HepG2 (cell line): ENCODE measurements at regions of chr6 and their contacts with region 1.

Region 1: DNA sequence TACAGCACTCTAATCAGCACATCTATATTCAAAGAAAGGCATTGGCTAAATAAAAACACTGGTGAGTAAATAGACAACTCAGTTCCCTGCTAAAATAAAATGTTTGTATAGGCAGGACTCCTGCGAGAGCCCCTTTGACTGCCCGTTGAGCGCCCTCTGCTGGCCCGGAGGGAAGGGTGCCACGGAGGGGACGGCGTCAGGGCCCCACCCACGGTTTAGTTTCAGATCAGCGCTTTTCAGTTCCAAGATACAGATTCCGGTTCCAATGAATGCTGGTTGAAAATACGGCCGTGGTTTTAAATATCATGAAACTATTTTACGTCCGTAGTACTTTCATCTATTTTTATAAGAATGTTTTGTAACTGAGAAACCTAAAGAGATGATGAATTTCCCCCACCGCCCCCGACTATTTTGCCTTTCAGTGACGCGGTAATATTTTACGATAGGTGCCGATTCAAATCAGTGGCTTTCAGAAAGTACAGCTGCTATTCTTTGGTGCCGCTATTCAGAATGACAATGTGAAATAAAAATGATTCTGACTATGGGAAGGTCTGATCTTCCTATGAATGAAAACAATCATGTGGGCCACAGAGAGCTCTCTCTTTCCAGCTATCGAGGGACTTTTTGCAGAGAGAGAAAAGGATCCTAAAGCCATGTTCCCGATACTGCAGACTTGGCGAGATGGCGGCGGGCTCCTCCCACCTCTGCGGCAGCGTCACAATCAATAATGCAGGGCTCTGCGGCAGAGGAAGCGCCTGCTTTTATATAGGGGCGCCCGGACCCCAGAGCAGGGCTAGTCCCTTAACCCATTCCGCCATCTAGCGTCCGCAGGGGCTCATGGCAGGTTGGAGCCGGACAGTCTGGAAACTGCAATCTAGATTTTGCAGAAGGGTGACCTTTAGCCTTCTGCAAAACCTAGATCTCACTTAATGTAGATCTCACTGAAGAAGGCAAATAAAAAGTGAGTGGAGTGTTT is 10.6 kb upstream of the CCN6 start:
- DNase-seq: peak; percentile 86
- ATAC-seq: peak; percentile 98
- H3K4me3 ChIP-seq: peak overlapping the region; percentile 62 to 93 (median 81)
- H3K27ac ChIP-seq: peak overlapping the region; percentile 31
- H3K4me1 ChIP-seq: peaks cover 4% of the 10 kb centered on the region; the same call in 1 of the 2 replicates
- H3K27me3 ChIP-seq: no peaks in the 10 kb centered on the region; a peak in 1 of 5 replicates
- CTCF ChIP-seq: peak; percentile 96
- EP300 ChIP-seq: no peak
- POLR2A ChIP-seq: no peak
- RAD21 ChIP-seq: peak; percentile 95

Region 2: DNA sequence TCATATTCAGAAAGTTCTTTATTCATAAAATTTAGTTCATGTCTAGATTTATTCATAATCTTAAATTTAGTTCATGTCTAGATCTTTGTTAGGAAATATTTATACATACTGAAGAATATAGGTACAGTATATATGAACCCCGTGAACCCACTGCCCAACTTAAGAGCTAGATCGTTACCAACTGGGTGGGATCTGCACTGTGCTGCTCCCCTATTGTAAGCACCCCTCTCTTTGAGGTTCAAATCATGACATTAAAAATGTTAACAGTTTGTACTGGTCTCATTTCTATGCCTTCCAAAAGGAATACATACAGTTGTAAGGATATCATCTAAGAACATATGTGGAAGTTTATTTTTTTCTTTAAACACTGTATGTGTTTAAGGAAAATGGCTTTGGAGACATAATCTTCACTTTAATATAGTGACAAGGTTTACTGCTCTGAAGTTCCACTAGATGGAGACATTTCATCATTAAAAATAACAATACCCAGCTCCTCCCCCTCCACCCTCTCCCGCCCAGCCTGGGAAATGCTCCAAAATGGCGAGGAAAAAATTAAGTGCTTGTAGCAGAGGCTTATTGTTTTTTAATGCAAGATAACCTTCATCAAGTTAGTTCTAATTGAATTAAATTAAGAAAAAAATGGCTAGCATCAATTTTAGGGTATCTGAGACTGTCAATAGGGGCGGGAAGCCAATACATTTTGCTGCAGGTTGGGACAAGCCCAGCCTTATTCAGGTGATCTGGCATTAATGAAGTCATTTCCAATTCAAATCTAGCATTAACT is 333.5 kb before region 1 on chr6:
- CTCF ChIA-PET with region 1: interaction called, 35 read pairs
- POLR2A ChIA-PET with region 1: no interaction called
- in situ Hi-C with region 1: no loop called
- intact Hi-C with region 1: loop called (anchors 1 kb)
- DNase-seq: peak; percentile 68
- ATAC-seq: peak; percentile 97
- H3K4me3 ChIP-seq: no peak overlapping the region
- H3K27ac ChIP-seq: no peak overlapping the region
- H3K4me1 ChIP-seq: no peaks in the 10 kb centered on the region
- H3K27me3 ChIP-seq: no peaks in the 10 kb centered on the region
- CTCF ChIP-seq: peak; percentile 77
- EP300 ChIP-seq: no peak
- POLR2A ChIP-seq: no peak
- RAD21 ChIP-seq: peak; percentile 84

Region 3: GRCh38 chr6:112010328-112010727 is 33.0 kb before region 1 on chr6:
- CTCF ChIA-PET with region 1: interaction called, 12 read pairs
- POLR2A ChIA-PET with region 1: no interaction called
- in situ Hi-C with region 1: no loop called
- intact Hi-C with region 1: loop called (anchors 1 kb)
- DNase-seq: peak; percentile 41
- ATAC-seq: peak; percentile 97
- H3K4me3 ChIP-seq: no peak overlapping the region
- H3K27ac ChIP-seq: no peak overlapping the region
- H3K4me1 ChIP-seq: peaks cover 17% of the 10 kb centered on the region; the same call in 1 of the 2 replicates
- H3K27me3 ChIP-seq: peaks cover 0 to 6% of the 10 kb centered on the region in 2 experiments; a peak in 2 of 5 replicates
- CTCF ChIP-seq: peak; percentile 90
- EP300 ChIP-seq: no peak
- POLR2A ChIP-seq: no peak
- RAD21 ChIP-seq: peak; percentile 65

Region 4: GRCh38 chr6:112321941-112322424 is 278.7 kb after region 1 on chr6:
- CTCF ChIA-PET with region 1: no interaction called
- POLR2A ChIA-PET with region 1: no interaction called
- in situ Hi-C with region 1: no loop called
- intact Hi-C with region 1: no loop called
- DNase-seq: no peak
- ATAC-seq: no peak
- H3K4me3 ChIP-seq: no peak overlapping the region
- H3K27ac ChIP-seq: no peak overlapping the region
- H3K4me1 ChIP-seq: peaks cover 5% of the 10 kb centered on the region; the same call in 1 of the 2 replicates
- H3K27me3 ChIP-seq: no peaks in the 10 kb centered on the region; a peak in 1 of 5 replicates
- CTCF ChIP-seq: no peak
- EP300 ChIP-seq: no peak
- POLR2A ChIP-seq: no peak
- RAD21 ChIP-seq: no peak